Activated CD4-positive, alpha-beta memory T cell treated with anti-CD3 and anti-CD28 coated beads for 36 hours (primary cell): ENCODE measurements at regions of chr15 and their contacts with region 1.

Region 1: GRCh38 chr15:50908210-50909009 is at the start of gene AP4E1:
- DNase-seq: peak; percentile 96
- H3K4me3 Mint-ChIP-seq: peak within 1 kb of the TSS; percentile 93
- H3K27ac Mint-ChIP-seq: peak within 1 kb of the TSS; percentile 98
- H3K4me1 Mint-ChIP-seq: peaks cover 22% of the 10 kb centered on the region
- H3K27me3 Mint-ChIP-seq: no peaks in the 10 kb centered on the region
- total RNA-seq, gene AP4E1: 12.0 to 12.7 TPM

Region 2: GRCh38 chr15:49620658-49621368 is 1287.6 kb before region 1 on chr15 and contains the starts of genes DTWD1 and FAM227B:
- CTCF ChIA-PET with region 1: no interaction called
- POLR2A ChIA-PET with region 1: no interaction called
- intact Hi-C with region 1: loop called (anchors 5 kb)
- DNase-seq: peak; percentile 96
- H3K4me3 Mint-ChIP-seq: peak within 1 kb of the TSS; percentile 94
- H3K27ac Mint-ChIP-seq: peak within 1 kb of the TSS; percentile 92
- H3K4me1 Mint-ChIP-seq: peaks cover 32% of the 10 kb centered on the region
- H3K27me3 Mint-ChIP-seq: no peaks in the 10 kb centered on the region
- total RNA-seq, gene DTWD1: 14.3 to 18.5 TPM
- total RNA-seq, gene FAM227B: 2.8 to 3.8 TPM

Region 3: GRCh38 chr15:50260969-50261496 is 647.4 kb before region 1 on chr15:
- CTCF ChIA-PET with region 1: no interaction called
- POLR2A ChIA-PET with region 1: no interaction called
- intact Hi-C with region 1: loop called (anchors 2 kb)
- DNase-seq: peak; percentile 41
- H3K4me3 Mint-ChIP-seq: peak overlapping the region; percentile 53
- H3K27ac Mint-ChIP-seq: peak overlapping the region; percentile 99
- H3K4me1 Mint-ChIP-seq: peaks cover 68% of the 10 kb centered on the region
- H3K27me3 Mint-ChIP-seq: no peaks in the 10 kb centered on the region

Region 4: DNA sequence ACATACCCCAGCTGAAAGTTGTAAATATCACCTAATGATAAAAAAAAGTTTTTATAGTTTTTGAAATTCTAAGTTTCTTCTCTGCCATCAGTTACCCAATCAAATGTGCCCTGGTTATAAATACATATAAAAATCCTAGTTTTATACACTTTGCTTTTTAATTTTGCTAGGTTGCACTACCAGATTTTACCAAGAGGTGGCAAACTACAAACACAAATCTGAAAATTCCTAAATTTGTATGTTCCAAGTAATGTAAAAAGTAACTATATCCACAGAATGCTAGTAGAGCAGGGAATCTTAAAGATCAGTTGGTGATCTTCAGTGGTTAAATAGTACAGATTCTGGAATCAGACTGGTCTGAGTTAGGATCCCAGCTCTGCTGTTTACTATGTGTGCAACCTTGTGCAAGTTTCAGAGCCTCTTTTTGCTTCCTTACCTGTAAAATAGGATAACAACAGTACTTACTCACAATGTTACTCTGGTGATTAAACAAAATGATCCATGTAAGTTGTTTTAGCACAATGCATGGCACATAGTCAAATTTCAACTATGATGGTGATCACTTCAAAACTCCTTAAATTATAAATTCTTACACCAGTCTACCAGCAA is 232.8 kb before region 1 on chr15:
- CTCF ChIA-PET with region 1: interaction called, 8 read pairs
- POLR2A ChIA-PET with region 1: no interaction called
- intact Hi-C with region 1: loop called (anchors 1 kb)
- DNase-seq: no peak
- H3K4me3 Mint-ChIP-seq: no peak overlapping the region
- H3K27ac Mint-ChIP-seq: peak overlapping the region; percentile 33
- H3K4me1 Mint-ChIP-seq: peaks cover 40% of the 10 kb centered on the region
- H3K27me3 Mint-ChIP-seq: no peaks in the 10 kb centered on the region

Region 5: GRCh38 chr15:50876989-50877360 is 31.4 kb before region 1 on chr15:
- CTCF ChIA-PET with region 1: interaction called, 11 read pairs
- POLR2A ChIA-PET with region 1: interaction called, 14 read pairs
- intact Hi-C with region 1: loop called (anchors 1 kb)
- DNase-seq: peak; percentile 70
- H3K4me3 Mint-ChIP-seq: peak overlapping the region; percentile 71
- H3K27ac Mint-ChIP-seq: peak overlapping the region; percentile 14
- H3K4me1 Mint-ChIP-seq: peaks cover 48% of the 10 kb centered on the region
- H3K27me3 Mint-ChIP-seq: peaks cover 3% of the 10 kb centered on the region